A549 (cell line): ENCODE measurements at regions of chr17 and their contacts with region 1.

Region 1: GRCh38 chr17:45256114-45256966 is 5.6 kb downstream of the SPATA32 start:
- DNase-seq: no peak
- ATAC-seq: peak; percentile 21 to 25; a peak in 4 of 6 replicates
- H3K4me3 ChIP-seq: no peak overlapping the region
- H3K27ac ChIP-seq: peak overlapping the region in 1 of 2 experiments; percentile 42; a peak in 2 of 6 replicates
- H3K4me1 ChIP-seq: peaks cover 22% of the 10 kb centered on the region
- CTCF ChIP-seq: no peak
- EP300 ChIP-seq: no peak
- POLR2A ChIP-seq: no peak
- RAD21 ChIP-seq: no peak

Region 2: GRCh38 chr17:45241328-45242011 is 14.9 kb before region 1 on chr17:
- CTCF ChIA-PET with region 1: interaction called, 1,378 read pairs
- POLR2A ChIA-PET with region 1: interaction called, 3 read pairs
- DNase-seq: no peak
- ATAC-seq: no peak
- H3K4me3 ChIP-seq: no peak overlapping the region
- H3K27ac ChIP-seq: no peak overlapping the region; a peak in 1 of 6 replicates
- H3K4me1 ChIP-seq: peaks cover 13% of the 10 kb centered on the region
- CTCF ChIP-seq: no peak
- EP300 ChIP-seq: no peak
- POLR2A ChIP-seq: no peak
- RAD21 ChIP-seq: no peak

Region 3: GRCh38 chr17:45270828-45271418 is 14.6 kb after region 1 on chr17:
- CTCF ChIA-PET with region 1: interaction called, 63 read pairs
- POLR2A ChIA-PET with region 1: no interaction called
- DNase-seq: peak in 1 of 2 experiments; percentile 68
- ATAC-seq: peak; percentile 36 to 72; a peak in 4 of 6 replicates
- H3K4me3 ChIP-seq: no peak overlapping the region
- H3K27ac ChIP-seq: no peak overlapping the region
- H3K4me1 ChIP-seq: peaks cover 21% of the 10 kb centered on the region
- CTCF ChIP-seq: peak; percentile 68
- EP300 ChIP-seq: no peak
- POLR2A ChIP-seq: no peak
- RAD21 ChIP-seq: peak; percentile 45 to 46; a peak in 4 of 5 replicates